Heart right ventricle (tissue), 16 donors: ENCODE measurements at regions of chr1 and their contacts with region 1.

Region 1: GRCh38 chr1:114670083-114671010 is 498 bp upstream of the DENND2C start:
- DNase-seq: peak; percentile 96
- ATAC-seq: peak; percentile 99 to 100 (median 100)
- H3K4me3 ChIP-seq: peak overlapping the region; percentile 57 to 93 (median 83)
- H3K27ac ChIP-seq: peak overlapping the region in 9 of 10 donors; percentile 44 to 85 (median 79)
- H3K4me1 ChIP-seq: peaks cover 0 to 19% (median 9%) of the 10 kb centered on the region in 9 donors
- H3K27me3 ChIP-seq: peaks cover 0 to 4% (median 0%) of the 10 kb centered on the region in 7 donors
- CTCF ChIP-seq: peak in 8 of 9 donors; percentile 7 to 38 (median 28)

Region 2: GRCh38 chr1:114446198-114446597 is 224.1 kb before region 1 on chr1:
- intact Hi-C with region 1: no loop called
- DNase-seq: no peak
- ATAC-seq: no peak
- H3K4me3 ChIP-seq: no peak overlapping the region
- H3K27ac ChIP-seq: peak overlapping the region in 1 of 10 donors; percentile 20
- H3K4me1 ChIP-seq: peaks cover 0 to 26% (median 10%) of the 10 kb centered on the region in 9 donors
- H3K27me3 ChIP-seq: no peaks in the 10 kb centered on the region
- CTCF ChIP-seq: no peak

Region 3: GRCh38 chr1:114757455-114758250 is 87.3 kb after region 1 on chr1 and contains the start of gene CSDE1:
- intact Hi-C with region 1: loop called in 1 of 10 experiments (anchors 5 kb)
- DNase-seq: peak; percentile 95 to 98
- ATAC-seq: peak; percentile 97 to 99 (median 98)
- H3K4me3 ChIP-seq: peak within 1 kb of the TSS; percentile 70 to 97 (median 92)
- H3K27ac ChIP-seq: peak within 1 kb of the TSS; percentile 92 to 100 (median 98)
- H3K4me1 ChIP-seq: peaks cover 3 to 52% (median 45%) of the 10 kb centered on the region in 9 donors
- H3K27me3 ChIP-seq: no peaks in the 10 kb centered on the region
- CTCF ChIP-seq: peak in 7 of 9 donors; percentile 37 to 64 (median 42)
- total RNA-seq, gene CSDE1: 720 to 1,012 (median 916) TPM